CD8-positive, alpha-beta memory T cell (primary cell): ENCODE measurements at regions of chr1 and their contacts with region 1.

Region 1: DNA sequence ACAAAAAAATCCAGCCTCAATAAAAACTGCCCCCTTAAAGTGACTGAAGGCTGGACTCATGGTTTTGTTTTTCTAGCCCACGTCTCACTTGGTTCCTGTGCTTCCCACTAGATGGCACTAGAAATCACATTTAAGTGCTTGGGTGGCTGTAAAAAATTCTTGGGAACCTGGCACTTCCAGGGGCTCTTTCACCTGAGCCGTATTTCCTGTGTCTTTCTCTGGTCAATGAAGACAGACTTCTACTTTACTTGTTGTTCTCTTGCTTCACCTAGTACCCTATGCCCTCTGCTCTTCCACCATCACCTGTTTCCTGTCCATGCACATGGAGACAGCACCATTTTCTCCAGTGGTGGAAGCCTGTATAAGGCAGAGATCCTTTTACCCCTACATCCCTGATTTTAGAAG is 20.0 kb downstream of the METTL13 start:
- DNase-seq: no peak
- H3K4me3 ChIP-seq: no peak overlapping the region
- H3K4me3 Mint-ChIP-seq: no peak overlapping the region
- H3K27ac ChIP-seq: no peak overlapping the region
- H3K27ac Mint-ChIP-seq: peak overlapping the region in 2 of 8 donors; percentile 13 to 27
- H3K4me1 ChIP-seq: no peaks in the 10 kb centered on the region
- H3K4me1 Mint-ChIP-seq: peaks cover 9 to 14% (median 13%) of the 10 kb centered on the region in 3 donors
- H3K27me3 ChIP-seq: no peaks in the 10 kb centered on the region
- H3K27me3 Mint-ChIP-seq: no peaks in the 10 kb centered on the region

Region 2: DNA sequence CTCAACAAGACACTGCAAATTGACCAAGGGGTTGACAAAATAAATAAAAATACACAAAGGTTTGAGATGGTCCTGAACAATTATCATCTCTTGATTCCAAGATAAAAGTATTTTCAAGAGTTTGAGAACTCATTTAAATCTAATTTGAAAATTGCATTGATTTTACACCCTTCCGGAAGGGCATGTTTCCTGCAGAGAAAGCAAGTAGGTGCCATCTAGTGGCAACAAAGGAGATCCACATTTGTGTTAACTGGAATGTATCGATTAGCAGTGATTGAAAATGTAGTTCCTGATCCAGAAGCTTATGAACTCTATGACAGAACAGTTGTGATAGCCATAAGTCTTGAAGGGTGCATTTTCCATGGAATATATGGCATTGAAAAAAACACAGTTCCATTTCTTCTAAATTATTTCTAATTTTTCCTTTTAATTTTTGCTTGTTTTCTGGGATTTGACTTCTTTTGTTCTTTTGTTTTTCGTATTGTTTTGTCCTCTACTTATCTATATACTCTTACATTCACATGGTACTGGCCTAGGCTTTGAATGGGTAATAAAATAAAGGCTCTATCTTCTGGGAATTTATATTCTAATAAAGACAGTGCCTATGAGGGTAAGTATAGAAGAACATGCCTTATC is 183.5 kb after region 1 on chr1:
- CTCF ChIA-PET with region 1: interaction called, 60 read pairs
- POLR2A ChIA-PET with region 1: no interaction called
- DNase-seq: peak in 2 of 5 donors; percentile 32 to 33
- H3K4me3 ChIP-seq: no peak overlapping the region
- H3K4me3 Mint-ChIP-seq: no peak overlapping the region
- H3K27ac ChIP-seq: no peak overlapping the region
- H3K27ac Mint-ChIP-seq: no peak overlapping the region
- H3K4me1 ChIP-seq: no peaks in the 10 kb centered on the region
- H3K4me1 Mint-ChIP-seq: peaks cover 0 to 2% (median 0%) of the 10 kb centered on the region in 3 donors
- H3K27me3 ChIP-seq: no peaks in the 10 kb centered on the region
- H3K27me3 Mint-ChIP-seq: peaks cover 1 to 11% of the 10 kb centered on the region in 2 donors